ENCODE measurements at regions of chr1 and their contacts with region 1.

Region 1: GRCh38 chr1:97920832-97921571 is at the start of gene DPYD:
- DNase-seq: peak; percentile 84
- H3K4me3 Mint-ChIP-seq: peak within 1 kb of the TSS; percentile 98
- H3K27ac Mint-ChIP-seq: peak within 1 kb of the TSS; percentile 89
- H3K4me1 Mint-ChIP-seq: peaks cover 34% of the 10 kb centered on the region
- H3K27me3 Mint-ChIP-seq: no peaks in the 10 kb centered on the region
- CTCF ChIP-seq: no peak
- total RNA-seq, gene DPYD: 37.4 and 48.2 TPM in 2 replicates

Region 2: GRCh38 chr1:97174039-97174701 is 746.8 kb before region 1 on chr1:
- CTCF ChIA-PET with region 1: no interaction called
- POLR2A ChIA-PET with region 1: no interaction called
- intact Hi-C with region 1: no loop called
- DNase-seq: peak; percentile 78
- H3K4me3 Mint-ChIP-seq: peak overlapping the region; percentile 21
- H3K27ac Mint-ChIP-seq: peak overlapping the region; percentile 64
- H3K4me1 Mint-ChIP-seq: peaks cover 10% of the 10 kb centered on the region
- H3K27me3 Mint-ChIP-seq: no peaks in the 10 kb centered on the region
- CTCF ChIP-seq: no peak

Region 3: DNA sequence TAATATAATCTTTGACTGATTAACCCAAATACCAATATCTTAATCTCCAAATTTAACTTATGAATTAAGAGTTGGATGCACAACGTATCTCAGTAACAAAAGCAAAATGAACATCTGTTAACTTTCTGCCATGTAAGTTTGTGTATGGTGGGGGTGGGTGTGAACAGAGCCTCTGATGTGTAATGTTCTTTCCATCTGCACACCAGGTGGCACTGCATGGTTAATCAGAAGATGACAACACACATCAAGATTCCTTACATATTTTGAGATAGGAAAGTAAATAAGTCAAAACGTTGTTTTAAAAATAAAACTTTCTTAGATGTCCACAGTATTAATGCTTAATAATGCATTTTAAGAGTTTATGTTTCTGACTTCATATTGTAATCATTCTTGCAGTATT is 252.1 kb before region 1 on chr1:
- CTCF ChIA-PET with region 1: no interaction called
- POLR2A ChIA-PET with region 1: interaction called, 4 read pairs
- intact Hi-C with region 1: loop called (anchors 2 kb)
- DNase-seq: peak; percentile 47
- H3K4me3 Mint-ChIP-seq: no peak overlapping the region
- H3K27ac Mint-ChIP-seq: no peak overlapping the region
- H3K4me1 Mint-ChIP-seq: no peaks in the 10 kb centered on the region
- H3K27me3 Mint-ChIP-seq: no peaks in the 10 kb centered on the region
- CTCF ChIP-seq: peak; percentile 34

Region 4: GRCh38 chr1:97849345-97850340 is 71.4 kb before region 1 on chr1:
- CTCF ChIA-PET with region 1: interaction called, 8 read pairs
- POLR2A ChIA-PET with region 1: interaction called, 25 read pairs
- intact Hi-C with region 1: no loop called
- DNase-seq: peak; percentile 84
- H3K4me3 Mint-ChIP-seq: peak overlapping the region; percentile 13
- H3K27ac Mint-ChIP-seq: peak overlapping the region; percentile 47
- H3K4me1 Mint-ChIP-seq: peaks cover 6% of the 10 kb centered on the region
- H3K27me3 Mint-ChIP-seq: no peaks in the 10 kb centered on the region
- CTCF ChIP-seq: no peak

Region 5: DNA sequence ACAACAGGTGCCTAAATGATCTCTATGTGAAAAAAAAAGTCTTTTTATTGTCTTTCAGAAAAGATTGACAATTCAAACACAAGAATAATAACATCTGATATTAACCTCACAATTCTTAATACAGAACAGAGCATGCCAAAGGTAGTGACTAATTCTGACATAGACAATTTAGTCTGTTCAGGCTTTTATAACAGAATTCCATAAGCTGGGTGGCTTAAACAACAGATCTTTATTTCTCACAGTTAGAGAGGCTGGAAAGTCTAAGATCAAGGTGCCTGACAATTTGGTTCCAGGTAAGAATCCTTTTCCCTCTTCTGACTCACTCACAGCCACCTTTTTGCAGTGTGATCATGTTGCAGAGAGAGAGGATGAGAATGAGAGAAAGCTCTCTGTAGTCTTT is 27.2 kb before region 1 on chr1:
- CTCF ChIA-PET with region 1: no interaction called
- POLR2A ChIA-PET with region 1: interaction called, 377 read pairs
- intact Hi-C with region 1: no loop called
- DNase-seq: no peak
- H3K4me3 Mint-ChIP-seq: no peak overlapping the region
- H3K27ac Mint-ChIP-seq: peak overlapping the region; percentile 42
- H3K4me1 Mint-ChIP-seq: peaks cover 10% of the 10 kb centered on the region
- H3K27me3 Mint-ChIP-seq: no peaks in the 10 kb centered on the region
- CTCF ChIP-seq: no peak

Region 6: GRCh38 chr1:97938285-97938642 is 17.3 kb after region 1 on chr1:
- CTCF ChIA-PET with region 1: no interaction called
- POLR2A ChIA-PET with region 1: interaction called, 41 read pairs
- intact Hi-C with region 1: no loop called
- DNase-seq: no peak
- H3K4me3 Mint-ChIP-seq: peak overlapping the region; percentile 51
- H3K27ac Mint-ChIP-seq: peak overlapping the region; percentile 76
- H3K4me1 Mint-ChIP-seq: peaks cover 13% of the 10 kb centered on the region
- H3K27me3 Mint-ChIP-seq: no peaks in the 10 kb centered on the region
- CTCF ChIP-seq: no peak

Region 7: DNA sequence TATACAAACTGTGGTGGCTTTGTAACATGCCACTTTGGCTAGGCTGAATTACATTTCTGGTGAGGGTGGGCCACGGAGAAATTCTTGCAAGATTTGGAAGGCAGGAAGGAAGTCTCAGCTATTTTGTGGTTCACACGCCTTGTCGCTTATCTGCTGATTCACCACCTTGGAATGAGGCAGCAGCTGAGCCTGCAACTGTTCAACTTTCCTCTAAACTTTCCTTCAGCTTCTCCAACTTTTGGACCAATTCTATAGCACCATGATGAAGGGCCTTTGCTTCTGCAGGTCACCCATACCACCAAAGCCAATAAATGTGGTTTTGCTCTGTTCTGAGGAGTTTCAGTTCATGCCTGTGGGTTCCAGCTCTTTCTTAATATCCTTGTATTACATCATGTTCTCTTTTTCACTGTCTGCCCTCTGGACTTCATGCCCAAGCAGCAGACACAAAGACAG is 402.9 kb after region 1 on chr1:
- CTCF ChIA-PET with region 1: interaction called, 3 read pairs
- POLR2A ChIA-PET with region 1: interaction called, 17 read pairs
- intact Hi-C with region 1: no loop called
- DNase-seq: peak; percentile 90
- H3K4me3 Mint-ChIP-seq: peak overlapping the region; percentile 48
- H3K27ac Mint-ChIP-seq: peak overlapping the region; percentile 83
- H3K4me1 Mint-ChIP-seq: peaks cover 42% of the 10 kb centered on the region
- H3K27me3 Mint-ChIP-seq: no peaks in the 10 kb centered on the region
- CTCF ChIP-seq: no peak